ENCODE measurements at regions of chr22 and their contacts with region 1.

Region 1: DNA sequence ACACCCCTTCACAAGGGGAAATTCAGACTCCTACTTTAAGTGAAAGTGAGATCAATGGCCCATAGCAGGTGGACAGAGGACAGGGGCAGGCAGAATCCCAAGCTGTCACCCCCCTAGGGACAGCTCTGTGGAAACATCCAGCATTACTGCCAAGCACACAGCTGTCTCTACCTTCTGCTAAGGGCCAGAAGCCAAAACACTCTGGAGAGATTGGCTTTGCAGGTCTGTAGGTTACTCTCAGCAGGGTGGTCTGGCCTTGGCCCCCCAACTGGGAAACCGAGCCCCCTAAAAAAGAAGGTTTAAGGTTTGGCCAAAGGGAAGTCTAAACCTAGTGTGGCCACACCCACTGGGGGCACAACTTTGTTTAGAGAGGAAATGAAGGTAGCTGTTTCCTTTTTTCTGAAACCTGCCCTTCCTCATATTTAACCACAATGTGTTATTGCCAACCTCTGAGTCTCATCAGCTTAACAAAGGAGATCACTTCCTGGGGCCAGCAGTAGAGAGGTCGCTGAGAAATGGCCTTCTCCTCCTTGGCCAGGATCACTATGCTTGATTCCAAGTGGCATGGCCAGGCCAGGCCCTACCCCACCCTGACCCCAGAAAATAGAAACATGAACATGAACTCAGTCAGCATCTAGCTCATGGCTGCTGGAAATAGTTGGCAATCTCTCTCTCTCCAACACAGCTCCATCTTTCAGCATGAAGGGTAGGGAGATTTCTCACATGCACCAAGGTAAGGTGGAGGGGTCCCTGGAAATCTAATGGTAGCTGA is 25.9 kb upstream of the SCARF2 start:
- DNase-seq: peak; percentile 52
- H3K4me3 Mint-ChIP-seq: peak overlapping the region; percentile 38
- H3K27ac Mint-ChIP-seq: peak overlapping the region; percentile 99
- H3K4me1 Mint-ChIP-seq: peaks cover 49% of the 10 kb centered on the region
- H3K27me3 Mint-ChIP-seq: no peaks in the 10 kb centered on the region

Region 2: DNA sequence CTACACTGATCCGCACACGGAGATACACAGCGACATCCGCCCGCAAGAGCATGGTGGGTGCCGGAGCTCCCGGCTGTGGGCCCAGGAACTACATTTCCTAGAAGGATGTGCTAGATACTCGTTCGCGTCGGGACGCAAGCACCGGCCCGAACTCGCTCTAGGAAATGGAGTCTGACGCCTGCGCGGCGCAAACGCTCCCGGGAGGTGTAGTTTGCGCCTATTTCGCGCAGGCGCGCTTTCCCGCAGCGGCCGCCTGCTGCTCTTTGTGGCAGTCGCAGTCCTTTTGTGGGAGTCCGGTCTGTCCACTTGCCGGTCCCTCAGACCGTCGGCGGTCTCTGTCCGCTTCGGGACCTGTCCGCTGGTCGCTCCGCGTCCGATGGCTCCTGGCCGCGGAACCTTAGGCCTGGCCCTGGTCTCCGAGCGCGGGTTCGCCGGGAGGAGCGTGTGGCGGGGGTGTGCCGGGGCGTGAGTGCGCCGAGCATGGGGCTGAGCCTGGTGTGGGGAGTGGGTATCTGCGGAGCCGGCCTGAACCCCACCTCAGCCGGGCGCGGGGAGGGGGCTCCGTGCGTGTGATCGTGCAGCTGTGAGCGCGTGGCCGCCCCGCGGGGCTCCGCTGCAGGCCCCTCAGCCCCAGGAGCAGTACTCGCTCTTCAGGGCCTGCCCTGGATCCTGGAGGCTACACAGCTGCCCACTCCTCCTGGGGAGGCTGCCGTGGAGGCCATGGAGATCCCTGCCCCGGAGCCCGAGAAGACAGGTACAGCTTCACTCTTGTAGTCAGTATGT is 69.4 kb before region 1 on chr22 and contains the start of gene ZNF74:
- CTCF ChIA-PET with region 1: no interaction called
- POLR2A ChIA-PET with region 1: interaction called, 11 read pairs
- DNase-seq: peak; percentile 89
- H3K4me3 Mint-ChIP-seq: peak within 1 kb of the TSS; percentile 81
- H3K27ac Mint-ChIP-seq: peak within 1 kb of the TSS; percentile 77
- H3K4me1 Mint-ChIP-seq: peaks cover 29% of the 10 kb centered on the region
- H3K27me3 Mint-ChIP-seq: no peaks in the 10 kb centered on the region
- total RNA-seq, gene ZNF74: 6.1 to 6.2 TPM

Region 3: DNA sequence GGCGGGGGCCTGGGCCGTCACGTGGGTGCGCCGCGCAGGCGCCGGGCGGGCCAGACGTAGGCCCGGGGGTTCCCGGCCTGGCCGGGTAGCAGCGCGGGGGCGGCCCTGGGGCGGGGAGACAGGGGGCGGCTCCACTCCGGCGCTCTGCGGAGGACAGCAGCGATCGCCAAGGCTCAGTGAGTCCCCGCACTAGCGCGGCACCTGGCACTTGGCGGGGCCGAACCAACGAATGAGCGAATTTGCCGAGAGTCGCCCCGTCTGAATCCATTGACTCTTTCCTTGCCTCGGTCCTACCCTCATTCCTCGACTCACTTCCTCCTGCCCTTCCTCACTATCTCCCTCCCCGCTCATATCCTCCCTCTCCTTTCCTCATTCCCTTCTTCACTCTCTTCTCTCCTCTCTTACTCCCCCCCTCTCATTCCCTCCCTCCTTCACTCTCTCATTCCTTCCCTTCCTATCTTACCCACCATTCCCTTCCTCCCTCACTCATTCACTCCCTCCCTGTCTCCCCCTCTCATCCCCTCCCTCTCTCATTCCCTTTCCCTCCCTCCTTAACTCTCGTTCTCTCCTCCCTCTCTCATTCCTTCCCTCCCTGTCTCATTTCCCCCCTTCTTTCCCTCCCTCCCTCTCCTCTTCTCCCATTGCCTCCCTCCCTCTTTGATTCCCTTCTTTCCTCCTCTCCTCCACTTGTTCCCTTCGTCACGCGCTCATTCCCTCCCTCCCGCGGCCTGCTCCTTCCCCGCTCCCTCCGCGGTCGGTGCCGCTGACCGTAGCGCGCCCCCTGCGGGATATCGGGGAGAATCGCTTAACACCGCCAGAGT is 32.6 kb after region 1 on chr22:
- CTCF ChIA-PET with region 1: interaction called, 10 read pairs
- POLR2A ChIA-PET with region 1: interaction called, 36 read pairs
- DNase-seq: peak; percentile 92
- H3K4me3 Mint-ChIP-seq: peak overlapping the region; percentile 88
- H3K27ac Mint-ChIP-seq: peak overlapping the region; percentile 58
- H3K4me1 Mint-ChIP-seq: peaks cover 34% of the 10 kb centered on the region
- H3K27me3 Mint-ChIP-seq: no peaks in the 10 kb centered on the region

Region 4: GRCh38 chr22:20507253-20508066 is 44.0 kb after region 1 on chr22 and contains the start of gene MED15:
- CTCF ChIA-PET with region 1: interaction called, 7 read pairs
- POLR2A ChIA-PET with region 1: interaction called, 57 read pairs
- DNase-seq: peak; percentile 93
- H3K4me3 Mint-ChIP-seq: peak within 1 kb of the TSS; percentile 93
- H3K27ac Mint-ChIP-seq: peak within 1 kb of the TSS; percentile 94
- H3K4me1 Mint-ChIP-seq: peaks cover 48% of the 10 kb centered on the region
- H3K27me3 Mint-ChIP-seq: no peaks in the 10 kb centered on the region
- total RNA-seq, gene MED15: 168 TPM

Region 5: DNA sequence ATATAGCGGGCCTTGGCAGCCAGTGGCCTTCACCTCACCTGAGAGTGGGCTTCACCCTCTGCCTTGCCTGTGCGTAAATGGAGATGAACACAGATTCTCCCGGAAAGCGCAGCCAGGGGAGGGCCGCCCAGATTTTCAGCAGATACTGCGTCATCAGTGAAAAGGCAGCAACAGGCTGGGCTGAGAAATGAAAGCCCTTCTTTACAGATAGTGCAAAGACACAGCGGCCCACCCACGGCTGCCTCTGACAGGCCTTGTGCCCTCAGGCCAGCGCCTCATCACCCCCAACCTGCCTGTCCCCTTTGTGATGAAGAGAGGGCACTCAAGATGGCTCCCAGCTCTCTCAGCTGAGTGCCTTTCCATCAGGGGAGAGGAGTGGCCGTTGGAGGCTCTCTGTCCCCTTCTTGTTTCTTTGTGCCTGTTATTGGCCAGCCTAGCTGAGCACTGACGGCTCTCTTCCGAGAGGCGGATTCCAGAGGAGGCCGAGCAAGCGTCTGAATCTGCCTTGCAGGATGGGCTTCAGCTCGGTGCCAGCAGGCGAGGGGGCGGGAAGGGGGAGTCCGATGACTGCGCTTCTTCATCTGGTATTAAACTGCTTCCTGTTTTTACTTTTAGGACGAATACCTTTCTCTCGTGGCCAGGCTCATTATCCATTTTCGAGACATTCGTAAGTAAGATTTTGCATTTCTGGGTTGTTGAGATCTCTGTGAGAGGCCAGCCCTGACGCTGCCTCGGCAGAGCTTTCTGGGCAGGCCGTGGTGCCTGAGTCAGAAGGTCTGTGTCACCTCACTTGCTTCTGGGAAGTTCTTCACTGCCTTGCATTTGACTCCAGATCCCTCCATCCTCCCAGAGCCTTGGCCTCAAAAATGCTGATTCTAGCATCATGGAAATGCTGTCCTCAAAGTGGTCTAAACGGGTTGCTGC is 87.6 kb after region 1 on chr22:
- CTCF ChIA-PET with region 1: no interaction called
- POLR2A ChIA-PET with region 1: interaction called, 18 read pairs
- DNase-seq: peak; percentile 59
- H3K4me3 Mint-ChIP-seq: peak overlapping the region; percentile 74
- H3K27ac Mint-ChIP-seq: peak overlapping the region; percentile 99
- H3K4me1 Mint-ChIP-seq: peaks cover 90% of the 10 kb centered on the region
- H3K27me3 Mint-ChIP-seq: no peaks in the 10 kb centered on the region

Region 6: DNA sequence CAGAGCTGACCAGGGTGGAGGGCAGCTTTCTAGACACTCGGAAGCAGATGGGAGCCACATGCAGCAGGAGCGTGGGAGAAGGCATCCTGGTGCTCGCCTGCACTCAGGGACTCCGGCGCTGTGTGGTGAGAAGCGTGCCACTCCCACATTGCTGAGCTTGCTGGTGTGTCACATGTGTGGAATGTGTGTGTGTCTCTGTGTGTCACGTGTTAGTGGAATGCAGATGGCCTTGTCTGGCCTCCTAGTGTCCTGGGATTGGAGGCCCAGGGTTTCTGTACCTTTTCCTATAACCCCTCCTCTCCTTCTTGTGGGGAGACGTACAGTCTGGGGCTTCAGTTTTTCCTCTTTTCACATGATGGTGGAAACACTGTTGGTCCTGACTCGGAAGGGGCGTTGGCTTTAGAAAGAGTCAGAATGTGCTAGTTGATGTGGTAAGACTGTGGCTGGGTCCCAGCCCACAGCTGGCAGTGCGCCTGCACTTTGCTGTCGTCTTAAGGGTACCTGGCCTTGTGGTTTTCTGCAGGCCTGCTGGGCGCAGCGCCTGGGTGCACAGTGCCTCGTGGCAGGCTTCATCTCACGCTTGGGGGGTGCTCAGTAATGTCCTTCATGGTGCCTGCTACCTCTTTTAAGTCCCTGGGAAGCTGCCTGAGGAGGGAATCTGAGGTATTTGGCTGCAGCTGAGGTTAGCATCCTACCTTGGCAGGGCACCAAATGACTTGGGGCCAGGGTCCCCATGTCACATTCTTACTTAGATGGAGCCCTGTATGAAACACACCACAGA is 105.7 kb after region 1 on chr22:
- CTCF ChIA-PET with region 1: interaction called, 6 read pairs
- POLR2A ChIA-PET with region 1: interaction called, 20 read pairs
- DNase-seq: peak; percentile 92
- H3K4me3 Mint-ChIP-seq: peak overlapping the region; percentile 54
- H3K27ac Mint-ChIP-seq: peak overlapping the region; percentile 96
- H3K4me1 Mint-ChIP-seq: peaks cover 86% of the 10 kb centered on the region
- H3K27me3 Mint-ChIP-seq: no peaks in the 10 kb centered on the region